Head of caudate nucleus (tissue), 42 donors: ENCODE measurements at regions of chr18 and their contacts with region 1.

Region 1: GRCh38 chr18:13726232-13726971 is at the starts of genes FAM210A and RNMT:
- DNase-seq: peak; percentile 93 to 99 (median 97)

Region 2: DNA sequence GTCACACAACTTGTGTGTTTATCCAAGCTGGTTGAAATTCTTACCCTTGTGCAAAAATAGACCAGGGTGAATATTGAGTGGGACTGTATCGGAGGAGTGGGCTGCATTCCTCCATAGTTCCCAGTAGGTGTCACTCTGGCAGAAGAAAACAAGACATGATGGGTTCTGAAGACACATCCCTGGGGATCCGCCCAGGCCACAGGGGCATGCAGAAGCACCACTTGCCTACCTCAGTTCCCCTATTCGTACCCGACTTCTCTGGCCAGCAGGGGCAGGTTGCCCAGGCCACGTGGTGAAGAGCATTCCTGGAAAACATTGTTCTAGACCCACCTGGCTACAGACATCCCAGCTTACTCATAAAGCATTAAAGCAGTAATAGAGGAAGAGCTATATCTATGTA is 168.3 kb before region 1 on chr18:
- intact Hi-C with region 1: loop called (anchors 5 kb)
- DNase-seq: peak; percentile 49 to 91 (median 76)

Region 3: DNA sequence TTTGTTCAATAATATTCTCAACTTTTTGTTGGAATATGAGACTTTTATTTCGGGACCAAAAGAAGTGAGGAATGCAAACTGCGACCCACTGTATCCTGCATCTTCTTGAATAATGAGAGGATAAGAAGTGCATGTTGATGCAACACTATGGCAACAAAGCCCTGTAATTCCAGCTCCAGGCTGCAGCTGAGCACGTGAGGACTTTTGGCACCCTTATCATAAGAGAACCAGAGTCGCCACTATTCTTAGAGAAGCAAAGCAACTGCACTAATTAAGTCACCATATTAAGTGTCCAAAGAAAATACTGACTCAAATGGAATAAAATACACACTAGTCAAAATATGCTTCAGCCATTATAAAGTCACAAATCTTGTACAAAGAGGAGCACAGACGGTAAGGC is 65.9 kb before region 1 on chr18:
- intact Hi-C with region 1: no loop called
- DNase-seq: no peak

Region 4: GRCh38 chr18:13680612-13681011 is 45.8 kb before region 1 on chr18:
- intact Hi-C with region 1: no loop called
- DNase-seq: peak in 21 of 42 donors; percentile 11 to 70 (median 36)

Region 5: DNA sequence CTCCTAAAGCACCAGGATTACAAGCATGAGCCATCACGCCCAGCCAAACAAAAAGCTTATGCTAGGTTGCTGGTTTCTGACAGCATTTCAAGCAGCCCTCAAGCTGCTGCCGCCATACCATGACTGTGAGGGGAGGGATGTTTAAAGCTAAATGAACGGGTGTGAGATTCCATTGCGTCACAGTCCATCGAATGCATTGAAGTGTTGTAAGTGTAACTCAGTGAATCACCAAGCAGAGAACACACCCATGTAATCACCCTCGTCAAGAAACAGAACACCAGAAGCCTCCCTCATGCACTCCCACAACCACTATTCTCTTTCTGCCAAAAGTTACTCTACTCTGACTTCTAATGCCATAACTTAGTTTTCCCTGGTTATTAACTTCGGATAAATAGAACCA is 64.8 kb after region 1 on chr18:
- intact Hi-C with region 1: no loop called
- DNase-seq: peak in 7 of 42 donors; percentile 4 to 47 (median 10)